ENCODE measurements at regions of chr3 and their contacts with region 1.

Region 1: DNA sequence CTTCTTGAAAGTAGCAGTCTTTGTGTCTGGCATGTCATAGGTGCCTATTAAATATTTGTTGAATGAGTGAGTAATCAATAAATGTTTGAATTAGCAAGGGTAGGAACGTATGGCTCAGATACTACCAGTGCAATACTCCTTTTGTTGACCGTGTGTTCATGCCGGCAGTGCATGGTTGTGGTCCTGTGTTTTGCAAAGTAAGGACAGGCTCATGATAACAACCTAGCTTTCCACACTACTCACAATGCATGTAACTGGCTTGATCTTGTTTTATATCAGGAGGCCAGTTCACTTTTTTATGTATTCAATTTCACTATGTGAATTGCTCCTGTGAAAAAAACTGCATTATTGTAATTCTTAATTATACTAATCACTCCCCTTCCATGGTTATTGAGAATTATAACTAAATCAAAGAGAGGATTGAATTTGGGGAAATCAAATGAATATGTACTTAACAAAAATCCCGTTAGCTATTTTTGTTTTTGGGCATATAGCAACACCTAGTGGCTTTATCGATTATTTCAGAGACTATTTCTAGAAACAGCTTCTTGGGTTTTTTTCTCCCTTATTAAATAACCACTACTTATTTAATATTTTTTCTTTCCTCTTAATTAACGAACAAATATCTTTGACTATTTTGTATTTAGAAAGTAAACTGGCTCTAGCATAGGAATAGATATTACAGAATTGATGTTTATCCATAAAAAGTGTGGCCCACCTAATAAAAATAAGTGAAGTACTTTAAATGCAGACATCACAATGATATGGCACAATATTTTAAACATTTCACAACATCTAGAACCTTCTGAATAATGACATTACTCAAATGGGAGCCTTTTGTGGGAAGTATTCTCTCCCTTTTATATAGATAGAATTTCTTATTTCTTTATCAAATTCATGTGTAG is 218.5 kb downstream of the BBX start:
- DNase-seq: no peak
- H3K4me3 ChIP-seq: no peak overlapping the region
- H3K27ac ChIP-seq: no peak overlapping the region
- H3K4me1 ChIP-seq: no peaks in the 10 kb centered on the region; a peak in 2 of 4 replicates
- H3K27me3 ChIP-seq: no peaks in the 10 kb centered on the region
- CTCF ChIP-seq: peak; percentile 70
- EP300 ChIP-seq: no peak
- RAD21 ChIP-seq: peak; percentile 78

Region 2: GRCh38 chr3:107235928-107236315 is 505.3 kb before region 1 on chr3:
- CTCF ChIA-PET with region 1: interaction called, 19 read pairs
- POLR2A ChIA-PET with region 1: no interaction called
- DNase-seq: peak; percentile 75
- H3K4me3 ChIP-seq: peak overlapping the region; percentile 37 to 53
- H3K27ac ChIP-seq: peak overlapping the region; percentile 45 to 62; a peak in 3 of 4 replicates
- H3K4me1 ChIP-seq: peaks cover 0 to 10% of the 10 kb centered on the region in 2 experiments; a peak in 2 of 4 replicates
- H3K27me3 ChIP-seq: no peaks in the 10 kb centered on the region
- CTCF ChIP-seq: peak; percentile 95
- EP300 ChIP-seq: no peak
- RAD21 ChIP-seq: peak; percentile 99

Region 3: DNA sequence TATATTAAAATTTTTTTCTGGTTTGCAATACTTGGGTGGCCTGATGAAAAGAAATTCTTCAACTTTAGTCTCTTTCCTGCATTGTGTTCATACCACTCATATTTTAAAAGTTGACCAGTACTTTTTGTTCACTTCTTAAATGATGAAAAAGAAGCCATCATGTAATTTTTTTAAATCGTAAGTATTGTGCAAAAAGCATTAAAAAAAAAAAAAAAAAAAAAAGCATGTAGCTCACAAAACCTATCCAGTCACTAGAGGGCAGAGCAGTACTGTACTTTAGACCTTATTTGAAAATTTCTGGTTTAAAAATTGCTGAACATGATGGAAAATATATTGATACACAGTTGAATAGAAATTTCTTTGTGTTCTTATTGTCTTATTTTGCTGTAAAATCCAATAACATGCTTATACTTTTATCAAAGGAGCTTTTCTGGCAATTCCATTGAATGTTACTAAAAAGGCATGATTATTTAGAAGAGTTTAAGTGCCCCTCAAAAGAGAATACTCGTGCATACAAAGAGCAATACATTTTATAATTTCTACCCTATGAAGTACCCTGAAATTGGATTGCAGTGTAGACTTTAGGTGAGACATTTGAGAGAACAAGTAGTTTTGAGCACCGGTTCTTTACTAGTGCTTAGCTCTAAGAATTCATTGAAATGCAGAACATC is 80.8 kb before region 1 on chr3:
- CTCF ChIA-PET with region 1: interaction called, 14 read pairs
- POLR2A ChIA-PET with region 1: no interaction called
- DNase-seq: peak; percentile 12
- H3K4me3 ChIP-seq: no peak overlapping the region
- H3K27ac ChIP-seq: 0 out of 4 replicates have a peak overlapping the region, but pooled peaks of 1 of the 2 experiments have one; percentile 0
- H3K4me1 ChIP-seq: peaks cover 7 to 21% of the 10 kb centered on the region in 2 experiments; a peak in 3 of 4 replicates
- H3K27me3 ChIP-seq: no peaks in the 10 kb centered on the region
- CTCF ChIP-seq: peak; percentile 87
- EP300 ChIP-seq: no peak
- RAD21 ChIP-seq: peak; percentile 72

Region 4: GRCh38 chr3:107684431-107684925 is 56.8 kb before region 1 on chr3:
- CTCF ChIA-PET with region 1: interaction called, 99 read pairs
- POLR2A ChIA-PET with region 1: no interaction called
- DNase-seq: no peak
- H3K4me3 ChIP-seq: no peak overlapping the region
- H3K27ac ChIP-seq: no peak overlapping the region
- H3K4me1 ChIP-seq: peaks cover 0 to 17% of the 10 kb centered on the region in 2 experiments; a peak in 3 of 4 replicates
- H3K27me3 ChIP-seq: no peaks in the 10 kb centered on the region
- CTCF ChIP-seq: no peak
- EP300 ChIP-seq: no peak
- RAD21 ChIP-seq: no peak

Region 5: DNA sequence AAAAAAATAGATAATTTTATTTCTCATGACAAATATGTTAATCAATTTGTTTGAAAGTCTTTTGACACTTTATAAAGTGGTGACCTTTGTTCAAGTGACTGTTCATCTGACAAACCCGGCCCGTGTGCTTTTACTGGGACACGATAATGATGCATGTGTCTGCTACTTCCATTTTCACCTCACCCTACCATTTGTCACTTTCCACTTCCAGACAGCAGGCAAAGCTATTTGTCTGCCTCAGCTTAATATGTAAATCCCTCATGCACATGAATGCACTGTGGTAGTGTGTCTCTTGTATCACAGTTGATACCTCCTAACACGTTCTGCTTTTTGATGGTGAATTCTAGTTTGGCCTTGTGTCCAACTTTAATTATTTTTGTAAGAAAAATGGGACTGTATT is 14.1 kb before region 1 on chr3:
- CTCF ChIA-PET with region 1: interaction called, 22 read pairs
- POLR2A ChIA-PET with region 1: no interaction called
- DNase-seq: no peak
- H3K4me3 ChIP-seq: no peak overlapping the region
- H3K27ac ChIP-seq: no peak overlapping the region
- H3K4me1 ChIP-seq: no peaks in the 10 kb centered on the region
- H3K27me3 ChIP-seq: no peaks in the 10 kb centered on the region
- CTCF ChIP-seq: no peak
- EP300 ChIP-seq: no peak
- RAD21 ChIP-seq: no peak

Region 6: DNA sequence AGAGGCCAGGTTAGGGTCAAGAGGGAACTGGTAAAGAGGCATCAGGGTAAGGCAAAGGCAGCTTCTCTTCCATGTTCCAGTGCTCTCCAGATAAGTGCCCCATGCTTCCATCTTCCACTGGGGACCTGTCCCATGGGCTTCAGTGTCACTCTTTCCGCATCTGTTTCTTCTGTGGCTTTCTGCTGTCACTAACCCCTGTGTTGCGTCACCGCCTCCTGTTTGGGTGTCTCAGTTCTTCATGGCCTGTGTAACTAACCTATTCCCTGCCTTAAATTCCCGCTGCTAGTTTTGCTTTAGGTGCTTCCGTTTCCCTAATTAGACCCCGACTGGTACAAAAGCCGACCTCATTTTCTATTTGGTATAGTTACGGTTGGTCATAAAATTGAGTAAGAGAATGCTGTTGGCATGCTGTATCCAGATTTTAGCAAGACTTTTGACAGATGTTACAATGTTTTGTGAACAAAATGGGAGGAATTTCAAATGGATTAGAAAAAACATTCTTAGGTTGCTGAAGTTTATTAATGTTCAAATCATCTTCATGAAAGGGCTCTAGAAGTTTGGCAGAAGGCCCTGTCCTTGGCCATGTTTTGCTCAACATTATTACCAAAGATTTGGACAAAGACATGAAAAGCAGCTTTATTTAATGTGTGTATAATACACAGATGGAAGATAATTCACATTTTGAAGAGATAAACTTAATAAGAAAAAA is 26.8 kb after region 1 on chr3:
- CTCF ChIA-PET with region 1: no interaction called
- POLR2A ChIA-PET with region 1: no interaction called
- DNase-seq: no peak
- H3K4me3 ChIP-seq: no peak overlapping the region
- H3K27ac ChIP-seq: no peak overlapping the region
- H3K4me1 ChIP-seq: no peaks in the 10 kb centered on the region; a peak in 1 of 4 replicates
- H3K27me3 ChIP-seq: no peaks in the 10 kb centered on the region
- CTCF ChIP-seq: no peak
- EP300 ChIP-seq: no peak
- RAD21 ChIP-seq: no peak

Region 7: GRCh38 chr3:107877936-107878335 is 136.7 kb after region 1 on chr3:
- CTCF ChIA-PET with region 1: no interaction called
- POLR2A ChIA-PET with region 1: no interaction called
- DNase-seq: no peak
- H3K4me3 ChIP-seq: no peak overlapping the region
- H3K27ac ChIP-seq: no peak overlapping the region
- H3K4me1 ChIP-seq: no peaks in the 10 kb centered on the region
- H3K27me3 ChIP-seq: no peaks in the 10 kb centered on the region
- CTCF ChIP-seq: no peak
- EP300 ChIP-seq: no peak
- RAD21 ChIP-seq: no peak